ENCODE measurements at regions of chr3 and their contacts with region 1.

Region 1: GRCh38 chr3:38227989-38228388 is 37.6 kb upstream of the SLC22A13 start:
- DNase-seq: no peak
- ATAC-seq: peak in 7 of 8 donors; percentile 55 to 95 (median 75)
- H3K4me3 ChIP-seq: no peak overlapping the region
- H3K27ac ChIP-seq: peak overlapping the region in 1 of 10 donors; percentile 32
- H3K4me1 ChIP-seq: peaks cover 0 to 19% (median 7%) of the 10 kb centered on the region in 9 donors
- H3K27me3 ChIP-seq: no peaks in the 10 kb centered on the region
- CTCF ChIP-seq: no peak

Region 2: GRCh38 chr3:37833302-37834186 is 394.4 kb before region 1 on chr3:
- intact Hi-C with region 1: no loop called
- DNase-seq: peak in 1 of 2 donors; percentile 36
- ATAC-seq: peak; percentile 76 to 92 (median 86)
- H3K4me3 ChIP-seq: no peak overlapping the region
- H3K27ac ChIP-seq: no peak overlapping the region
- H3K4me1 ChIP-seq: peaks cover 0 to 4% (median 0%) of the 10 kb centered on the region in 9 donors
- H3K27me3 ChIP-seq: no peaks in the 10 kb centered on the region
- CTCF ChIP-seq: peak; percentile 15 to 64 (median 50)

Region 3: GRCh38 chr3:37922721-37923568 is 305.0 kb before region 1 on chr3:
- intact Hi-C with region 1: no loop called
- DNase-seq: peak in 1 of 2 donors; percentile 47
- ATAC-seq: peak; percentile 37 to 89 (median 72)
- H3K4me3 ChIP-seq: no peak overlapping the region
- H3K27ac ChIP-seq: peak overlapping the region; percentile 23 to 75 (median 66)
- H3K4me1 ChIP-seq: peaks cover 18 to 84% (median 71%) of the 10 kb centered on the region in 9 donors
- H3K27me3 ChIP-seq: no peaks in the 10 kb centered on the region
- CTCF ChIP-seq: peak in 1 of 9 donors; percentile 8

Region 4: DNA sequence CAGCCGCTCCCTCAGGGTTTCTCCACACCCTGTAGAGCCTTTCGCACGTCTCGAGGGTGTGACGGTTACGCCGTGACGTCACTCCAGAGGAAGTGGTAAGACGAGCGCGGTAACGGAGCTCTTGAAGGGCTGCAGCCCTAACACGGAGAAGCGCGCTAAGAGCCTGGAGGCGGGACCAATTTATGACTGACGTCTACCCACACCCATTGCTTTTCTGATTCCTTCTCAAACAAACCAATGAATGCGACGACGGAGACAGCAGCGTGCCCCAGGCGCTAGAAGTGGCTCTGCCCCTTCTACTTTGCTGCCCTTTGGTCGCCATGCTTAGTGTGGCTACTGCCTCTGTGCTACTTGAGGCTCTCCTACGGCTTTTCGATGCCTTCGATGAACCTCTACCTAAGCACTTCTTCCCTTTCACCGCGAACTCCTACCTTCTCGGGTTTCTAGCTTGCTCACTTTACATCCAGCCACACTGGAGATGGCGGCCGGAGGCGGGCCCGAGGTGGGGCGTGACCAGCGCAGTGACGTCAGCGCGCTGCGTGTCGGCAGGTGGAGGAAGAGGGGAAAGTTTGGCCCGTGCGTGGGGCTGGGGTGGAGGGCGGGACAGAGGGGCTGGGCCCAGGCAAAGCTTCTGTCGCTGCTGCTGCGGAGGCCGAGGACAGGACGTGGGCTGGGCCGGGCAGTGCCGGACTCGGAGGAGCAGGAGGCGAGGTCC is 62.9 kb before region 1 on chr3 and contains the start of gene OXSR1:
- intact Hi-C with region 1: loop called in 1 of 10 experiments (anchors 10 kb)
- DNase-seq: peak; percentile 97 to 99
- ATAC-seq: peak; percentile 94 to 98 (median 97)
- H3K4me3 ChIP-seq: peak within 1 kb of the TSS; percentile 88 to 99 (median 95)
- H3K27ac ChIP-seq: peak within 1 kb of the TSS; percentile 92 to 99 (median 98)
- H3K4me1 ChIP-seq: peaks cover 3 to 43% (median 26%) of the 10 kb centered on the region in 9 donors
- H3K27me3 ChIP-seq: no peaks in the 10 kb centered on the region
- CTCF ChIP-seq: no peak
- total RNA-seq, gene OXSR1: 27.3 to 38.4 (median 31.6) TPM

Region 5: GRCh38 chr3:38327335-38328009 is 99.5 kb after region 1 on chr3:
- intact Hi-C with region 1: no loop called
- DNase-seq: no peak
- ATAC-seq: no peak
- H3K4me3 ChIP-seq: no peak overlapping the region
- H3K27ac ChIP-seq: no peak overlapping the region
- H3K4me1 ChIP-seq: no peaks in the 10 kb centered on the region
- H3K27me3 ChIP-seq: peaks cover 0 to 8% (median 0%) of the 10 kb centered on the region in 7 donors
- CTCF ChIP-seq: no peak

Region 6: GRCh38 chr3:38343797-38344594 is 116.0 kb after region 1 on chr3:
- intact Hi-C with region 1: no loop called
- DNase-seq: no peak
- ATAC-seq: no peak
- H3K4me3 ChIP-seq: no peak overlapping the region
- H3K27ac ChIP-seq: no peak overlapping the region
- H3K4me1 ChIP-seq: peaks cover 0 to 22% (median 9%) of the 10 kb centered on the region in 9 donors
- H3K27me3 ChIP-seq: no peaks in the 10 kb centered on the region
- CTCF ChIP-seq: no peak